Kidney (tissue), 22 donors: ENCODE measurements at regions of chr10 and their contacts with region 1.

Region 1: GRCh38 chr10:70880077-70880534 is 8.3 kb downstream of the PCBD1 start:
- DNase-seq: peak; percentile 79 to 89 (median 80)
- H3K4me3 ChIP-seq: no peak overlapping the region
- H3K27ac ChIP-seq: no peak overlapping the region
- H3K4me1 ChIP-seq: no peaks in the 10 kb centered on the region
- H3K27me3 ChIP-seq: no peaks in the 10 kb centered on the region
- CTCF ChIP-seq: peak; percentile 96

Region 2: GRCh38 chr10:70461215-70461986 is 418.7 kb before region 1 on chr10:
- intact Hi-C with region 1: loop called (anchors 10 kb)
- DNase-seq: peak in 4 of 5 donors; percentile 59 to 76 (median 67)
- H3K4me3 ChIP-seq: no peak overlapping the region
- H3K27ac ChIP-seq: no peak overlapping the region
- H3K4me1 ChIP-seq: peaks cover 0 to 9% (median 0%) of the 10 kb centered on the region in 3 donors
- H3K27me3 ChIP-seq: peaks cover 2% of the 10 kb centered on the region
- CTCF ChIP-seq: peak; percentile 87

Region 3: DNA sequence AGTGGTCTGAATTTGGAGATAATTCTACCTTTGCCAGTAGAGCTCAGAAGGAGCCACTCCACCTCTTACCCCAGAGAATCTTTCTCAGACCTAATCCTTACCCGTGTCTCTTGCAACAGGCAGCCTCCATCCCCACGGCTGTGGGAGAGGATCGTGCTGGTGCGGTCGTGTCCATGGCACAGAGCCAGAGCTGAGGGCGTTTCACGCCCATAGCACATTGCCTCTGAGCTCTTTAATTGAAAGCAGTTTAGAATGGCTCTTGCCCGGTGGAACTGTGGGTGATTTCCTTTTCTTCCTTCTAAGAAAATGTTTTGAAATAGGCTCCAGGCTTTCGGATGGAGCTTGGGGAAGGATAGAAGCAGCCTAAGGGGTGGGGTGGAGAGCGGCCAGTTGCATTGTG is 319.0 kb before region 1 on chr10:
- intact Hi-C with region 1: loop called (anchors 10 kb)
- DNase-seq: peak in 2 of 5 donors; percentile 41 to 43
- H3K4me3 ChIP-seq: no peak overlapping the region
- H3K27ac ChIP-seq: no peak overlapping the region
- H3K4me1 ChIP-seq: peaks cover 0 to 3% (median 0%) of the 10 kb centered on the region in 3 donors
- H3K27me3 ChIP-seq: no peaks in the 10 kb centered on the region
- CTCF ChIP-seq: no peak

Region 4: GRCh38 chr10:70742537-70743429 is 137.3 kb before region 1 on chr10:
- intact Hi-C with region 1: no loop called
- DNase-seq: peak; percentile 48 to 93 (median 70)
- H3K4me3 ChIP-seq: no peak overlapping the region
- H3K27ac ChIP-seq: no peak overlapping the region
- H3K4me1 ChIP-seq: peaks cover 7 to 15% (median 13%) of the 10 kb centered on the region in 3 donors
- H3K27me3 ChIP-seq: no peaks in the 10 kb centered on the region
- CTCF ChIP-seq: no peak

Region 5: DNA sequence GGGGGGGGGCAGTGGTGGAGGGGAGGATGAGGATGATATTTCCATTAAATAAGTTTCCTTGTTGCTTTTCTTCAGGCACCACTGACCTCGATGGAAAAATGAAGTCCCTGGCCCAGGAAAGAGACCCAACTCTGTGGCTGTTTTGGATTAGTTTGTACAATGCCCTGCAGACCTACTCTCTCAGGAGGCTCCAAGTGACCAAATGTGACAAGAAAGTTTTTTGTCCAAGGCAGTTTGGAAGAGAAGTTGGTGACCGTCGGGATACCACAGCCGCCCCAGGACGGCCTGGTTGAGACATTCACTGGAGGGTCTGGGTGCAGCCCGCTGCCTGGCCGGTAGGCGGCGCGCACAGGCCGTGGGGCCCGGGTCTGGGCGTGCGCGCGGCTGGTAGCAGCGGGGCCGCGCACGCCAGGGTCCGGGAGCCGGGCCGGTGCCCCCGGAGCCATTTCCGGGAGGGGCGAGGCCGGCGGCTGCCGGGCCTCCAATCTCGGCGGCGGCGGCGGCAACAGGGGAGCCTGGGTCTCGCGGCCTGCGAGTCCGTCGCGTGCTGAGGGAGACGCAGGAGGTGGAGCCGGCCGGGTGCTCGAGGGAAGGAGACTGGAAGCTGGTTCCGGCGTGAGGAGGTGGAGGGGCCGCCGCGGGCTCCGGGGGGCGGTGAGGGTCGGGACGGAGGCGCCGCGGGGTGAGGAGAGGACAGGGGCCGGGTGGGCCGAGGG is 64.4 kb before region 1 on chr10 and contains the start of gene SGPL1:
- intact Hi-C with region 1: loop called (anchors 10 kb)
- DNase-seq: peak; percentile 87 to 95 (median 92)
- H3K4me3 ChIP-seq: peak within 1 kb of the TSS; percentile 58 to 81 (median 76)
- H3K27ac ChIP-seq: peak within 1 kb of the TSS; percentile 93 to 94
- H3K4me1 ChIP-seq: no peaks in the 10 kb centered on the region
- H3K27me3 ChIP-seq: no peaks in the 10 kb centered on the region
- CTCF ChIP-seq: peak; percentile 98
- total RNA-seq, gene SGPL1: 105 TPM